ENCODE measurements at regions of chr2 and their contacts with region 1.

Region 1: GRCh38 chr2:157538064-157538463 is 90.6 kb downstream of the ACVR1C start:
- DNase-seq: no peak
- ATAC-seq: no peak
- H3K4me3 Mint-ChIP-seq: no peak overlapping the region
- H3K27ac Mint-ChIP-seq: no peak overlapping the region
- H3K4me1 Mint-ChIP-seq: no peaks in the 10 kb centered on the region
- H3K27me3 Mint-ChIP-seq: no peaks in the 10 kb centered on the region
- CTCF ChIP-seq: no peak

Region 2: DNA sequence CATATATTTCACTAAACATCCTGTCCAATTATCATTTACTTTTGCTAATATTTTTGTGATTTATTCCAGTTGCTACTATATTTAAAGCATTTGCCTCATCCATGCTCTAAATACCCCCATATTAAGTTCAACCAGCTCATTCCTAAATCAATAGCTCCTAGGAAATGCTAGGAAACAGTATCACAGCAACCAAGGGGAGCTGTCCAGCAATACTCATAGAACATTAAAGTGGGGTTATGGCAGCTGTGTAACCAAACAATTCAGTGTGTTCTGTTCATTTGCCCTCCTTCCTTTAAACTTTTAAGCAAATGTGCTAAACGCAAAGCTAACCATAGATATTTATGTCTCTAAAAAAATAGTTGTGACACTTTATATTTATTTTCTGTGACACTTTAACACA is 49.5 kb after region 1 on chr2:
- CTCF ChIA-PET with region 1: no interaction called
- POLR2A ChIA-PET with region 1: no interaction called
- intact Hi-C with region 1: loop called (anchors 5 kb)
- DNase-seq: no peak
- ATAC-seq: no peak
- H3K4me3 Mint-ChIP-seq: no peak overlapping the region
- H3K27ac Mint-ChIP-seq: no peak overlapping the region
- H3K4me1 Mint-ChIP-seq: no peaks in the 10 kb centered on the region
- H3K27me3 Mint-ChIP-seq: peaks cover 3% of the 10 kb centered on the region
- CTCF ChIP-seq: no peak